GM10248 (cell line): ENCODE measurements at regions of chrX and their contacts with region 1.

Region 1: DNA sequence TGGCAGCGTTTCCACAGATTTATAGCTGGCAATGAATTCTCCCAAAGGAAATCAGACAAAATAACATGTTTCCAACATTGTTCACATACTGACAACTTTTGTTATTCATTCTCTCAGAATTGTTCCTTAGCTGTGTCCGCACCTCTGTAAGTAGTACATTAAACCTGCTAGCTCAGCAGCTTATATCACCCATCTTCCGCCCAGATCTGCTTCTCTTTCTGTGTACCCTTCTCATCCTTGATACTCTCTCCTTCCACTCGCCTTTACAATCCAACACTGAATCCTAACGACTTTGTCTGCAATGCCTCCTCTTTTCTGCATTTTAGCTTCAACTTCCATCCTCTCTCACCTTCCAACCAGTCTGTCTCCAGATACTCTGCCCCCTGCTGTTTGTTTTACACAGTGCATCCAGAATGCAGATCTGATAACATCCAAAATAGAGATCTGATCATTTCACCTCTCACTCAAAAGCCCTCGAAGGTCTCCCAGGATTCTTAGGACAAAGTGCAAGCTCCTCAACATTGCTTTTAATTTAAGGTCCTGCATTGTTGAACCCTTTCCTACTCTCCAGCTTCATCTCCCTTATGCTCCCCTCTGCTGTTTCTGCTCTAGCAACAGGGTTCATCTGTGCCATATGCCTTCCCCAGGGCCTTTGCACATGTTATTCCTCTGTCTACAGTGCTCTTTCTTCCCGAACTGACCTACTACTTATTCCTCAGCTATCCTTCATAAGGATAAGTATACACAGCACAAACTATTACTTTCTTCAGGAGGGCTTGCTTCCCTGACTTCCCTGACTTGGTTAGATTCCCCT is 67.3 kb upstream of the VBP1 start:
- DNase-seq: peak; percentile 15
- CTCF ChIP-seq: peak; percentile 30

Region 2: GRCh38 chrX:154980330-154981096 is 168.4 kb before region 1 on chrX:
- CTCF ChIA-PET with region 1: interaction called, 11 read pairs
- POLR2A ChIA-PET with region 1: no interaction called
- DNase-seq: peak; percentile 61
- CTCF ChIP-seq: peak; percentile 64

Region 3: GRCh38 chrX:155246748-155247147 is 97.8 kb after region 1 on chrX:
- CTCF ChIA-PET with region 1: no interaction called
- POLR2A ChIA-PET with region 1: no interaction called
- DNase-seq: no peak
- CTCF ChIP-seq: no peak